ENCODE measurements at regions of chr1 and their contacts with region 1.

Region 1: DNA sequence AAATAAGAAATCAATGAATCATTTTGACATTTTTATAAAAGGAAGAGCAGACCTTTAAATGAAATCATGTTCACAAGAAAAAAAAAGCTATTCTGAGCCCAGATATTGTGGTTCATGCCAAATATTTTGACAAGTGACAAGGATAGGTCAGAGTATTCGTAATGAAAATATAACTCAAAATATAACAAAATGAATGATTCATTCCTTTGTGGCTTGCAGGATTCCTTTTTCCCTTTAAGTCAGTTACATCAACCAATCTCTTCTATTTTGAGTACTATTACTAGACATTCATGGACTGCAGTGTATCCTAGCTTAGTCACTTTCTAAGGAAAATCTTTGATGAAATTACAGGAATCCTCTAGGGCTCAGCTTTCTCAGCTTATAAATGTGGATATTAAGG is 188.7 kb downstream of the COL11A1 start:
- DNase-seq: no peak
- ATAC-seq: no peak
- H3K4me3 ChIP-seq: no peak overlapping the region
- H3K4me3 Mint-ChIP-seq: no peak overlapping the region
- H3K27ac ChIP-seq: no peak overlapping the region
- H3K27ac Mint-ChIP-seq: no peak overlapping the region
- H3K4me1 ChIP-seq: no peaks in the 10 kb centered on the region
- H3K4me1 Mint-ChIP-seq: no peaks in the 10 kb centered on the region
- H3K27me3 ChIP-seq: no peaks in the 10 kb centered on the region
- H3K27me3 Mint-ChIP-seq: no peaks in the 10 kb centered on the region

Region 2: GRCh38 chr1:101653482-101653946 is 1266.1 kb before region 1 on chr1:
- CTCF ChIA-PET with region 1: no interaction called
- POLR2A ChIA-PET with region 1: interaction called in 1 of 2 experiments, 10 read pairs
- DNase-seq: no peak
- ATAC-seq: no peak
- H3K4me3 ChIP-seq: no peak overlapping the region
- H3K4me3 Mint-ChIP-seq: no peak overlapping the region
- H3K27ac ChIP-seq: no peak overlapping the region
- H3K27ac Mint-ChIP-seq: no peak overlapping the region
- H3K4me1 ChIP-seq: no peaks in the 10 kb centered on the region
- H3K4me1 Mint-ChIP-seq: no peaks in the 10 kb centered on the region
- H3K27me3 ChIP-seq: no peaks in the 10 kb centered on the region
- H3K27me3 Mint-ChIP-seq: peaks cover 13% of the 10 kb centered on the region in 2 donors

Region 3: GRCh38 chr1:102954576-102954975 is 34.9 kb after region 1 on chr1:
- CTCF ChIA-PET with region 1: no interaction called
- POLR2A ChIA-PET with region 1: no interaction called
- DNase-seq: no peak
- ATAC-seq: no peak
- H3K4me3 ChIP-seq: no peak overlapping the region
- H3K4me3 Mint-ChIP-seq: no peak overlapping the region
- H3K27ac ChIP-seq: no peak overlapping the region
- H3K27ac Mint-ChIP-seq: no peak overlapping the region
- H3K4me1 ChIP-seq: no peaks in the 10 kb centered on the region
- H3K4me1 Mint-ChIP-seq: no peaks in the 10 kb centered on the region
- H3K27me3 ChIP-seq: no peaks in the 10 kb centered on the region
- H3K27me3 Mint-ChIP-seq: no peaks in the 10 kb centered on the region

Region 4: GRCh38 chr1:103025858-103026409 is 106.3 kb after region 1 on chr1:
- CTCF ChIA-PET with region 1: no interaction called
- POLR2A ChIA-PET with region 1: no interaction called
- DNase-seq: no peak
- ATAC-seq: no peak
- H3K4me3 ChIP-seq: no peak overlapping the region
- H3K4me3 Mint-ChIP-seq: no peak overlapping the region
- H3K27ac ChIP-seq: no peak overlapping the region
- H3K27ac Mint-ChIP-seq: no peak overlapping the region
- H3K4me1 ChIP-seq: no peaks in the 10 kb centered on the region
- H3K4me1 Mint-ChIP-seq: no peaks in the 10 kb centered on the region
- H3K27me3 ChIP-seq: no peaks in the 10 kb centered on the region
- H3K27me3 Mint-ChIP-seq: no peaks in the 10 kb centered on the region